RWPE1 (cell line): ENCODE measurements at regions of chr20 and their contacts with region 1.

Region 1: DNA sequence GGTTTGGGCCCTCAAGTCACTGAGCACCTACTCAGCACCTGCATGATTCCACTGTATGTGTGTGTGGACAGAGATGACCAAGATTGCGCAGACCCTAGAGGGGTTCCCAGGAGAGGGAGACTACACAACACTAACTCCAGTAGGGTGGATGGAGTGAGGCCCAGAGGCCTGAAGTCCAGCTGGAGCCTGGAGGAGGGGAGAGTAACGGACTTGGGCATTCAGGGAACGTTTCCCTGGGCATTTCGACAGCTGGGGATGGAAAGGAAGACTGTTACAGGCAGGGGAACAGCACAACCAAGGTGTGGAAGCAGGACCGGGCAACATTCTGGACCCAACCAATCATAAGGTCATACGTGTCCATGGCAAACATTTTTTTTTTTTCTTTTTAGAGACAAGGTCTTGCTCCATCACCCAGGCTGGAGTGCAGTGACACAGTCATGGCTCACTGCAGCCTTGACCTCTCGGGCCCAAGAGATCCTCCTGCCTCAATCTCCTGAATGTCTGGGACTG is 11.1 kb upstream of the CEBPB start:
- DNase-seq: no peak
- H3K27ac ChIP-seq: peak overlapping the region; percentile 29
- CTCF ChIP-seq: peak; percentile 75

Region 2: GRCh38 chr20:49915378-49916145 is 264.0 kb before region 1 on chr20 and contains the start of gene SPATA2:
- CTCF ChIA-PET with region 1: no interaction called
- POLR2A ChIA-PET with region 1: no interaction called
- DNase-seq: peak; percentile 99
- H3K27ac ChIP-seq: peak within 1 kb of the TSS; percentile 98
- CTCF ChIP-seq: no peak

Region 3: DNA sequence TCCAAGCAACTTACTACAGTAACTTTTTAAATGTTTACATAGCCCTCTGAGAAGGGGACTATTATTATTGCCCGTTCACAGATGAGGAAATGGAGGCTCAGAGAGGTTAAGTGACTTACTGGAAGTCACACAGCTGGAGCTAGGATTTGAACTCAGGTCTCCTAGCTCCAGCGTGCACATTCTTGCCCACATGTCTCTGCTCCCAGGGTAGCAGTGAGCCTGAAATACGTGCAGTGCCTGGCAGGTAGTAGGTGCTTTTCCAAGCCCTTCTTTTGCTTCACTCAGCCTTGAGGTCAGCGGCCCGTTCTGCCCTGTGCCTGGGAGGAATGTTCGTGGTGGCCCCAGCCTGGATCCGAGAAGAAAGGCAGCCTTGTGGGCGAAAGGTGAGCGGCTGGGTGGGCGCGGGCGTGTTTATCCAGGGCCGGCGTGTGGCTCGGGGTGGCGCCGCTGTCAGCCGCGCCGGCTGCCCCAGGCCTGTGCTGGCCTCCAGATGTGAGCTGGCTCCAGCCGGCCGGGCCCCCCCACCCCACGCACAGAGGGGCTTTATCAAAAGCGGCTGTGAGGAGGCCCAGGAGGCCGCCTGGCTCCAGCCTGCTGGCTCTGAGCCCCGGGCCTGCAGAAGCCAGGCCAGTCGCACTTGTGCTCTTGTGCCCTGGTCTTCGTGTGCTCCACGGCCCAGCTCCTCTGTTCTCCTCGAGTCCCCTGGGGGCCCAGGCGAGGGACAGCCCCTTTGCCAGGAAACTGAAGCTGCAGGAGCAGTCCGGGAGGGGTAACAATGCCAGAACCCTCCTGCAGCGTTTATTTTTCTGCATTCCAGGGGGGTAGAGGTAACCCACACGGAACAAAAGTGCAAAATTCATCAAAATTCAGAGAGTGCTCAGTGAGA is 124.7 kb before region 1 on chr20:
- CTCF ChIA-PET with region 1: no interaction called
- POLR2A ChIA-PET with region 1: no interaction called
- DNase-seq: no peak
- H3K27ac ChIP-seq: no peak overlapping the region
- CTCF ChIP-seq: no peak

Region 4: DNA sequence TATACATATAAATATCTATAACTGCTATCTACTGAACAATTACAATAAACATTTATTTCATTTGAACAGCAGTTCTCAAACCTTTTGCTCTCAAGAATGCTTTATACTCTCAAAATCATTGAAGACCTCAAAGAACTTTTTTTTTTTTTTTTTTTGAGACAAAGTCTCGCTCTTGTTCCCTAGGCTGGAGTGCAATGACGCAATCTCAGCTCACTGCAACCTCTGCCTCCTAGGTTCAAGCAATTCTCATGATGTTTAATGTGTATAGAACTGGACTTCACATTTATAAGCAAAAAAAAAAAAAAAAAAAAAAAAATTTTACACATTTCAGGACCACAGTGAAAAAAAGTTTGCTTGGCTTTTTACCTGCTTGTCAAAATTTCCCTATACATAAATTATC is 78.3 kb before region 1 on chr20:
- CTCF ChIA-PET with region 1: no interaction called
- POLR2A ChIA-PET with region 1: interaction called, 12 read pairs
- DNase-seq: no peak
- H3K27ac ChIP-seq: no peak overlapping the region
- CTCF ChIP-seq: no peak

Region 5: DNA sequence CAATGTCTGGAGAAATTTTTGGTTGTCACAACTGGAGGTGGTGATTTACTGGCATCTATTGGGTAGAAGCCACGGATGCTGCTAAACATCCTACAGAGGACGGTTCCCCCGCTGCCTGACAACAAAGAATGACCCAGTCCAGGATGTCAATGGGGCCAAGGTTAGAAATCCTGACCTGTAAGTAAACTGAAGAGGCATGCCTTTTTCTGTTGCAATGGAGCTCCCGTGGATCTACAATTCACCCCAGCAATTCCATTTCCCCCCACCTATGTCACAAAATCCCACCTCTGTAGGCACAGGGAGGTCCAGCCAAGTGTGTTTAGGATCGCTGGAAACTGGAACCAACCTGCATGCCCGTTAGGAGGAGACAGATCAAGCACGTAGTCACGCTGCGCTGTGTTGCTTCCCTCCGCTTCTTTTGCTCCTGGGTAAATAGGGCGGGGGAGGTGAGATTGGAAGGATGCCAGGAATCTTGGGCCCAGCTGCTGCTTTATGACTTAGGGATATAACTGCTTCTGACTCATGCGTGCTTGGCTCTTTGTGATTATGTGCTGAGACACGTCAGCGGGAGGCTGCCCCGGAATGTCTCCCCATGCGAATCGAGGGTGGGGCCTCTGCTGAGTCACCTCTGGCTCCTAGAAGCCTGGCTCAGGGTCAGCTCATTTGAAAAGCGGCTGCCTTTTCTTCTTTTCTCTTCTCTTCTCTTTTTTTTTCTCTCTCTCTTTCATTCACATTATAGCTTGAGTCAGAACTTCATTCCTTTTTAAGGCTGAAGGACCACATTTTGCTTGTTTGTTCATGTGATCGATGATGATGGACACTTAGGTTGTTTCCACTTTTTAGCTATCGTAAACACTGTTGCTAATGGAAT is 13.6 kb before region 1 on chr20:
- CTCF ChIA-PET with region 1: interaction called, 26 read pairs
- POLR2A ChIA-PET with region 1: interaction called, 4 read pairs
- DNase-seq: peak; percentile 100
- H3K27ac ChIP-seq: peak overlapping the region; percentile 94
- CTCF ChIP-seq: no peak